CD8-positive, alpha-beta T cell (primary cell): ENCODE measurements at regions of chr7 and their contacts with region 1.

Region 1: DNA sequence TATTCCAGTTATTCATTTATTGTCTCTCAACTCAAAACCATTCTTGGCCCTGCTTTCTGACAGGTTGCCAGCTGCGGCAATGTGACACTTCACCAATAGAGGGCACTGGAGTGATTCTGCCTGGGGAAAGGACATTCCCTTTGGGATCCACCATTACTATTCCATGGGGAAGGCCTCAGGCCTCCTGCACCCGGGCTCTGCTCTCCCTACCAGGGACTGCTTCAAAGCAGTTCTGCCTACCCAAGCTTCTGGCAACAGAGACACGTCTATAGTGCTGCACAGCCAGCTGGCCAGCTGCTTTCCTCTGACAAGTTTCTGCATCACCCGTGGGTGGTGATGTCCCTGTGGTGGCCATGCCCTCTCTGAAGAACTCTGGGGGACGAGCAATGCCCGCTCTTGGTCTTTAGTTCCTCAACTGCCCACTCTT is 163.8 kb downstream of the ELMO1 start:
- DNase-seq: peak in 6 of 9 experiments; percentile 24 to 61 (median 50)
- ATAC-seq: peak; percentile 46
- H3K4me3 ChIP-seq: no peak overlapping the region
- H3K4me3 Mint-ChIP-seq: no peak overlapping the region
- H3K27ac ChIP-seq: no peak overlapping the region
- H3K27ac Mint-ChIP-seq: no peak overlapping the region
- H3K4me1 ChIP-seq: peaks cover 12% of the 10 kb centered on the region
- H3K4me1 Mint-ChIP-seq: peaks cover 39% of the 10 kb centered on the region
- H3K27me3 ChIP-seq: no peaks in the 10 kb centered on the region
- H3K27me3 Mint-ChIP-seq: no peaks in the 10 kb centered on the region
- CTCF ChIP-seq: peak; percentile 76

Region 2: GRCh38 chr7:37311355-37311754 is 26.5 kb after region 1 on chr7:
- CTCF ChIA-PET with region 1: interaction called, 23 read pairs
- POLR2A ChIA-PET with region 1: no interaction called
- intact Hi-C with region 1: no loop called
- DNase-seq: peak in 2 of 9 experiments; percentile 34 to 55
- ATAC-seq: peak; percentile 43
- H3K4me3 ChIP-seq: no peak overlapping the region
- H3K4me3 Mint-ChIP-seq: no peak overlapping the region
- H3K27ac ChIP-seq: peak overlapping the region; percentile 48 to 49
- H3K27ac Mint-ChIP-seq: peak overlapping the region; percentile 91
- H3K4me1 ChIP-seq: peaks cover 45% of the 10 kb centered on the region
- H3K4me1 Mint-ChIP-seq: peaks cover 67% of the 10 kb centered on the region
- H3K27me3 ChIP-seq: no peaks in the 10 kb centered on the region
- H3K27me3 Mint-ChIP-seq: no peaks in the 10 kb centered on the region
- CTCF ChIP-seq: no peak

Region 3: DNA sequence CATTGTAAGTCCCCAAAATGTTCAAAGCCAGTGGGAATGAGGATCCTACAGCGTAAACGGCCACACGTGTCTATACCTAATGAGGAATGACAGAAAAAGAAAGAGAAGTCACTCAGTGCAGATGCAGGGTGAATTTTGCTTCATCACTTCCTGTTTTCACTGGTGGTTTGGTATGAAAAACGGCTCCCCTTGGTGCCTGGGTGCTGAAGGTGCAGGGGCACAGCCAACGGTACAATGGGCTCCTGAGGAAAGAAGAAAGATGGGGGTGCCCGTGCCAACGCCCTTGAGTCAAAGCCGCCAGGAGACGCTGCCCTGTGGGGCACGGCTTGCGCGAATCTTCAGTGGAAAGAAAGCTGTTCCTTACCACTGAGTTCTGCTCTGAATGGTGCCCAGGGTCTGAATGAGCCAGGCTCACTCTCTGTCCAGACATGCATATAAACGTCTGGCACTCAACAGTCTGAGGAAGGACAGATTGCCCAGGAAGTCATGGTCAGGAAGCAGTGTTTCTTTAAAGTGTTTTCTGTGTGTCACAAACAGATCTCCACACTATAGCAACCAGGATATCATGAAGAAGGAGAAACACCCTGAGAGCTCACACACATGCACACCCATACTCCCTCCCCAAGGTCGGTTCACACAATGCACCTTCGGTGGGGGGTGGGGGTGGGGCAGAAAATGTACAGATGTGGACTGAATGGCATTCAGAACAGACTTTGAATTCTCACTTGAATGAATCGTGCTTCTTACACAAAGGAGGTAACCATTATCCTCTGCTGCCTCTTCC is 58.1 kb after region 1 on chr7:
- CTCF ChIA-PET with region 1: interaction called, 9 read pairs
- POLR2A ChIA-PET with region 1: interaction called, 4 read pairs
- intact Hi-C with region 1: loop called (anchors 1 to 2 kb)
- DNase-seq: peak; percentile 48 to 87 (median 73)
- ATAC-seq: peak; percentile 91
- H3K4me3 ChIP-seq: peak overlapping the region; percentile 53 to 64
- H3K4me3 Mint-ChIP-seq: peak overlapping the region; percentile 93
- H3K27ac ChIP-seq: peak overlapping the region; percentile 69 to 72
- H3K27ac Mint-ChIP-seq: peak overlapping the region; percentile 97
- H3K4me1 ChIP-seq: peaks cover 39% of the 10 kb centered on the region
- H3K4me1 Mint-ChIP-seq: peaks cover 69% of the 10 kb centered on the region
- H3K27me3 ChIP-seq: no peaks in the 10 kb centered on the region
- H3K27me3 Mint-ChIP-seq: no peaks in the 10 kb centered on the region
- CTCF ChIP-seq: peak; percentile 43

Region 4: GRCh38 chr7:37420946-37421695 is 136.3 kb after region 1 on chr7:
- CTCF ChIA-PET with region 1: no interaction called
- POLR2A ChIA-PET with region 1: no interaction called
- intact Hi-C with region 1: no loop called
- DNase-seq: no peak
- ATAC-seq: no peak
- H3K4me3 ChIP-seq: no peak overlapping the region
- H3K4me3 Mint-ChIP-seq: no peak overlapping the region
- H3K27ac ChIP-seq: no peak overlapping the region
- H3K27ac Mint-ChIP-seq: peak overlapping the region; percentile 11
- H3K4me1 ChIP-seq: no peaks in the 10 kb centered on the region
- H3K4me1 Mint-ChIP-seq: peaks cover 54% of the 10 kb centered on the region
- H3K27me3 ChIP-seq: no peaks in the 10 kb centered on the region
- H3K27me3 Mint-ChIP-seq: no peaks in the 10 kb centered on the region
- CTCF ChIP-seq: no peak

Region 5: GRCh38 chr7:37495574-37496184 is 210.9 kb after region 1 on chr7:
- CTCF ChIA-PET with region 1: interaction called, 16 read pairs
- POLR2A ChIA-PET with region 1: no interaction called
- intact Hi-C with region 1: loop called (anchors 1 to 5 kb)
- DNase-seq: peak in 2 of 9 experiments; percentile 42 to 53
- ATAC-seq: peak; percentile 56
- H3K4me3 ChIP-seq: no peak overlapping the region
- H3K4me3 Mint-ChIP-seq: no peak overlapping the region
- H3K27ac ChIP-seq: no peak overlapping the region
- H3K27ac Mint-ChIP-seq: no peak overlapping the region
- H3K4me1 ChIP-seq: no peaks in the 10 kb centered on the region
- H3K4me1 Mint-ChIP-seq: no peaks in the 10 kb centered on the region
- H3K27me3 ChIP-seq: peaks cover 0 to 2% of the 10 kb centered on the region in 2 experiments
- H3K27me3 Mint-ChIP-seq: no peaks in the 10 kb centered on the region
- CTCF ChIP-seq: peak; percentile 93